Calu3 (cell line): ENCODE measurements at regions of chr7 and their contacts with region 1.

Region 1: DNA sequence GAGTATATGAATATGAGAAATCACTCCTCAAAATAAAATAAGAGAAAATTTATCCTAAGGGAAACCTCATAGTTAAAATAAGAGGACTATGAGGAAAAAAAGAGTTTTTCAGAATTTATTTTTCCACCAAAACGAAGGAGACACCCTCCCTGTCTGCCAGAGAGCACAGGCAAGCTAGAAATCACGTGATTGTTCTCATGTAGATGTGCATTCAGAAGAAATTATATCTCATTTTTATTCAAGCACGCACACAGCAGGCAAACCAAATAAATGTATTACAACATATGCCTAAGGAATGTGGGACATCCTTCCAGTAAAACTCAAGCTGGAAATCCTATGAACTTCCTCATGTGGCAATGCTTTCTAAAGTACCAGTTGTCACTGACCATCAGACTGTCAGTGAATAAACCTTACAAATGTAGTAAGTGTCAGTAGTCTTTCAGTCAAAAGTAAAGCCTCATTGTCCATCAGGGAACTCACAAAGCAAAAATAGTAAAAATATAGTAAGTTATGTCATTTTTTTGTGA is 350.2 kb upstream of the POM121L12 start:
- DNase-seq: no peak
- H3K4me3 Mint-ChIP-seq: no peak overlapping the region
- H3K27ac Mint-ChIP-seq: no peak overlapping the region
- H3K4me1 Mint-ChIP-seq: no peaks in the 10 kb centered on the region
- H3K27me3 Mint-ChIP-seq: no peaks in the 10 kb centered on the region
- CTCF ChIP-seq: no peak

Region 2: DNA sequence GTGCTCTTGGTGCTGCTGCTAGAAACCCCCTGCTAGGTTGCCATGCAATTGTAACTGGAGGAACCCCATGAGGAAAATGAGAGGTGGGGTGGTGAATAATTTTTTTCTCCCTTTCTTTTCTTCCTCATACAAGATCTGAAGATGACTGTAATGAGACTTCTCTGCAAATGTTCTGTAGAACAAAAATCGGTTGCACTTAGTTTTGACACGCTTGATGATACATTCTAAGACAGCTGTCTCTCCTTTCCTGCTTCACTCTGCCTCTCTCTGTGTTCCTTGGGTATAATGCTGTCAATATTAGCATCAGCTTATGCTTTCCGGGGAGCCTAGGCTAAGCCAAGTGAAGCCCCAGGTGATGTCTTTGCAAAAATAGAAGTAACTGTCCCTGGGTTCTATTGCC is 1071.7 kb after region 1 on chr7:
- CTCF ChIA-PET with region 1: interaction called, 10 read pairs
- intact Hi-C with region 1: no loop called
- DNase-seq: no peak
- H3K4me3 Mint-ChIP-seq: no peak overlapping the region
- H3K27ac Mint-ChIP-seq: no peak overlapping the region
- H3K4me1 Mint-ChIP-seq: no peaks in the 10 kb centered on the region
- H3K27me3 Mint-ChIP-seq: no peaks in the 10 kb centered on the region
- CTCF ChIP-seq: no peak